Cardiac septum (tissue), 1 donor: ENCODE measurements at regions of chr18 and their contacts with region 1.

Region 1: GRCh38 chr18:25764777-25765176 is 325.6 kb downstream of the SS18 start:
- DNase-seq: no peak

Region 2: GRCh38 chr18:25814841-25815458 is 50.2 kb after region 1 on chr18:
- intact Hi-C with region 1: loop called (anchors 10 kb)
- DNase-seq: no peak

Region 3: DNA sequence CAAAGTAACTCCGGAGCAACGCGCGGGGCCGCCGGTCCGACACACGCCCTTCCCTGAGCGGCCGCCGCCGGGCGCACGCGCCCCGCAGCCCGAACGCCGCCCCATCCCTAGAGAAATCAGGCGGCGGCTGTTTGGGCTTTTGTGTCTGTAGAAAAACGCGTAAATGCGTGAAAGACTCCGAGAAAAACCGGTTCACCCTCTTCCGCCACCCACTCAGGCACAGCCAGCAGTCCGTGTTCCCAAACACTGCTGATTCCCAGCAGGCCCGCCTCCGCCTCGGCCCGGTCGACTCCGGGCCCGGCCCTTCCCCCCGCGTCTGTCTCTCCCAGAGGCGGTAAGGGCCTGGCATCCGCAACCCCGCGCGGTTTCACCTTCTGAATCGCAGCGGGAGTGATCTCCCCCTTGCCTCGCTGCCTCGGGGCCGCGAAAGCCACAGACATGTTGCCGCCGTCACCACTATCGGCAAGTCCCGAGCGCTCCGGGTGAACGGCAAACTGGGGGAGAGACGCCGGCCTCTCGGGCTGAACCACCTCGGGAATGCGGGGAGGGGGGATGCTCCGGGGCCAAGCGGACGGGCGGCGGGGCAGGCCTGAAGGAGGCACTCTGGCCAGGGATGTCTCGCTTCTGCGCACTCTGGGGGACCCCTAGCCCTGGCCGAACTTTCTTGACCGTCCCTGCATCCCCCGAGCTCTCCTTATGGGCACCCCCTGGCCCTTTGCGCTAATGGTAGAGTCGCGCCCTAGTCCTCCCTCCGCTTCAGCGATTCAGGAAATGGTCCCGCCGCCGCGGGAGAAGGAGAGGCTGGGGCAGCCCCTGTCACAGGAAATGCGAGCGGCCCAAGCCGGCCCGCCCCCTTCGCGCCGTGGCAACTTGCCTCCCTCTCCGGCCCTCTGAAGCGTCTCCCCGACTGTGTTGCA is 325.6 kb after region 1 on chr18 and contains the start of gene SS18:
- intact Hi-C with region 1: no loop called
- DNase-seq: peak; percentile 97
- total RNA-seq, gene SS18: 42.4 TPM